Motor neuron (in vitro differentiated cells): ENCODE measurements at regions of chr4 and their contacts with region 1.

Region 1: GRCh38 chr4:6327041-6327917 is 57.6 kb downstream of the WFS1 start:
- ATAC-seq: peak; percentile 34 to 92 (median 64)
- H3K4me3 ChIP-seq: no peak overlapping the region
- H3K27ac ChIP-seq: no peak overlapping the region
- H3K4me1 ChIP-seq: peaks cover 3 to 9% of the 10 kb centered on the region in 2 donors

Region 2: DNA sequence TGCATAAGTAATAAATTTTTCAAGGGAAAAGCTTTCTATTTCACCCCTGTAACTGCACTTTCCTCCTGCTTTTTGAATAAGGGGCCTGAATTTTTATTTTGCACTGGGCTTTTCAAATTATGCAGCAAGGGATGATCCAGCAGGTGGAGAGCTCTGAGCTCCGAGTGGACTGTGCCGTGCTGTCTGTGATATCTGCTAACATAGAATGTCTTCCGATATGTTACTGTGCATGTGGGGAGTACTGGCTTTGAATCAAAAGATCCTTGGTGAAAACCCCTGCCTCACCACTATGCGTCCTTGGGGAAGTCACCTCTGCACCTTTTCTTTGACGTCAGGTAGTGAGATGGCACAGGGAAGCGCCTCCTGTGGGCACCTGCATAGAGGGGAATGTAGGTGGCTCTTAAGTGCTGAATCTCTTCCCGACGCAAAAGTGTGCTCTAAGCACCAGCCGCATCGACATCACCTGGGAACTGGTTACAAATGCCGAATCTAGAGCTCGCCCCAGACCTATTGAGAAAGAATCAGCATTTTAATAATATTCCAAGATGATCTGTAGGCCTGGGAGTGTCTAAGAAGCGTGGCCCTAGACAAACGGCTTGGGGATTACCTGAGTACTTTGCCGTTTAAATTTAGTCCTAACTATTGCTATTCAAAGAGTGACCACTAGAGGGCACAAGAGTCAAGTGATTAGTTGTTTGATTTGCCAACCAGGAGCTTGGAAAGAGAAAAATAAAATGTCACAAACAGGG is 76.9 kb before region 1 on chr4:
- in situ Hi-C with region 1: loop called in 3 of 9 experiments (anchors 5 to 10 kb)
- ATAC-seq: peak; percentile 43 to 67 (median 61)
- H3K4me3 ChIP-seq: no peak overlapping the region
- H3K27ac ChIP-seq: no peak overlapping the region
- H3K4me1 ChIP-seq: no peaks in the 10 kb centered on the region